ENCODE measurements at regions of chr1 and their contacts with region 1.

Region 1: DNA sequence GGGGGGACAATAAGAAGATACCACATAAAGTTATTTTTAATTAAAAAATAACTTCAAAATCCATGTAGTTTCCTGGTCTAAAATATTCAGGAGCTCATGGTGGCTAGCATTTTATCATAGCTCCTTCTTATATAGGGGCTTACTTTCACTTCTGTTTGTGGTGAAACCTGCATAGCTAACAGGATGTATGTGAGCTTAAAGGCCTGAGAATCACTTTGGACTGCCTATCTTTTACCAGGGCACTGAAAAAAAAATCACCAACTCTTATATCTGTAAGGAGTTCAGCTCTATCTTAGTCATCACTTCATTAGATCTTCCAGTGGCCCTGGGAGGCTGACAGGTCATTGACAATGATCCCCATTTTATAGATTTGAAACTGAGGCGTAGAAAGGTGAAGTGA is 21.3 kb downstream of the UROD start:
- DNase-seq: no peak
- H3K27ac ChIP-seq: no peak overlapping the region
- CTCF ChIP-seq: no peak

Region 2: GRCh38 chr1:44339731-44340130 is 693.6 kb before region 1 on chr1:
- CTCF ChIA-PET with region 1: no interaction called
- POLR2A ChIA-PET with region 1: interaction called, 11 read pairs
- DNase-seq: no peak
- H3K27ac ChIP-seq: no peak overlapping the region
- CTCF ChIP-seq: no peak

Region 3: GRCh38 chr1:44947063-44947773 is 86.1 kb before region 1 on chr1:
- CTCF ChIA-PET with region 1: no interaction called
- POLR2A ChIA-PET with region 1: no interaction called
- DNase-seq: no peak
- H3K27ac ChIP-seq: no peak overlapping the region
- CTCF ChIP-seq: no peak